ENCODE measurements at regions of chr11 and their contacts with region 1.

Region 1: DNA sequence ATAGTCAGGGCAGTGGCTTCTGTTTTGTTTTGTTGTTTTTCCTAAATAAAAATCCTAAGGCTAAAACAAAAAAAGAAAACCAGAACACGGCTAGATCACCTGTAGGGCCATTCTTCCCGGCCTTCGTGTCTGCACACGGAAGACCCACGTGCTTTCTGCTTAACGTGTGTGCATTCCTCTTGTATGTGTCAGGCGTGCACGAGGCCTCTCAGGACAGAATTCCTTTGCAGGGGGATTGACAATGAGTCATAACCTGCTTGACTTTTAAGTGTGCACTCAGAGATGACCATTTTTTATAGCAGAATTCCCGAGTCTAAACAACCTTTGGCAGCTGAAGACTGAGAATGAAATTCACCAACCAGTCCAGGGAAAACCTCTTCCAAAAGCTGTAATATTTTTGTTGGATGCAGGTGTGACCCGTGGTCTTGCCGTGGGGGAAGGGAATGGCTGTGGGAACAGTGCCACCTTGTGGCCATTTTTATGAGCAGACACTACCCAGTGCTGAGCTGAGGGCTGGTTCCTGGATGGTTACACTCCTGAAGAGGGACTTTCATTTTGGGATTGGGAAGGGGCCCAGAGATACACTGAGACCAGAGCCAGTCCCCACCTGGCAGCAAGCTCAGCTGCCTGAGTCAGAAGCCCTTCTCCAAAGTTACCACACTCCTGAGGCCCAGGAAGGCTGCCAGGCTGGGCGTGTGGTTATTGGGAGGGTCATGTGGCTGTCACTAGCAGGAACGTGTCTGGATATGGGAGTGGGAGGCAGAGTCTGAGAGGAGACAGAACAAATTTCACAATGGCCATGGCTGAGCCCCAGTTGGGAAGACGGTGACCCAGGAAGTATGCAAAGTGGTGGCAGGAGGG is 35.8 kb upstream of the DKK3 start:
- DNase-seq: peak; percentile 95
- H3K4me3 ChIP-seq: peak overlapping the region; percentile 20 to 22
- H3K27ac ChIP-seq: peak overlapping the region; percentile 51 to 69
- H3K4me1 ChIP-seq: peaks cover 0 to 29% (median 20%) of the 10 kb centered on the region in 4 donors
- H3K27me3 ChIP-seq: no peaks in the 10 kb centered on the region
- CTCF ChIP-seq: peak; percentile 89 to 99

Region 2: DNA sequence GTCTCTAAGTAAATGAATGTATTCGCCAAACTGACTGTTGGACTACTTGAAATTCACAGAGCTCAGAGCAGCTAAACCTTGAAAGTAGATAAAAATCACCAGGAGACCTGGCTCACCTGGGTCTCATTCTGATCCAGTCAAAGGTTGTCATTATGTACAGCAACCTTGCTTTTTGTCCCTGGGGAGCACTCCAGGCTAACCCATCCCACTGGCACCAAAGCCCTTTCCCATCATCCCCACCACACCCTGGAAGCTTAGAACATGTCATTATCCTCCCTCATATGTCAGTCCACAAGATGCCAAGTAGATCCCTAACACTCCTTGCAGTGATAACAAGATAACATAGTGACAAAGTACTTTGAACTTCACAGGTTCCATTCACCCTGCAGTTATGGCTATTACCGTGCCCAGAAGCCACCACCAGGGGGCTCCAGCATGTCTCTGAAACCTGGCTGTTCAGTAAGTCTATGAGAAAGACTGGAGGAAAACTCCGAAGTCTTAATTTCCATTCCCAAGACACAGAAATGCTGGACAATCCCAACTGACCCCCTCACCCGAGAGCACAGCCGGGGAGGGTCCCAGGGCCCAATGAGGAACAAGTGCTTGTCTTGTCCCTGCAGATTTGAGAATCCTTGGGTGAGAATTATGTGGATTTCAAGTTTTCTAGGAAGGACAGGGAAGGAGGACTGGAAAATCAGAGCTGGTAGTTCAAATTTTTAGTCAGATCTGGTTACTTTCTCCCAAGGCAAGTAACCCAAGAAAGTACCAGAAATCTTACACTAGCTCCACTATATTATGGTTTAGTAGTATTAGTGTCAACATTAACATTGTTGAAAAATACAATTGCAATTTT is 245.4 kb before region 1 on chr11:
- intact Hi-C with region 1: loop called (anchors 5 kb)
- DNase-seq: peak; percentile 71 to 87
- H3K4me3 ChIP-seq: no peak overlapping the region
- H3K27ac ChIP-seq: no peak overlapping the region
- H3K4me1 ChIP-seq: peaks cover 0 to 5% (median 0%) of the 10 kb centered on the region in 4 donors
- H3K27me3 ChIP-seq: peaks cover 0 to 2% of the 10 kb centered on the region in 2 donors
- CTCF ChIP-seq: peak; percentile 59 to 72

Region 3: GRCh38 chr11:11931461-11932055 is 112.6 kb before region 1 on chr11:
- intact Hi-C with region 1: loop called (anchors 1 kb)
- DNase-seq: no peak
- H3K4me3 ChIP-seq: no peak overlapping the region
- H3K27ac ChIP-seq: no peak overlapping the region
- H3K4me1 ChIP-seq: no peaks in the 10 kb centered on the region
- H3K27me3 ChIP-seq: no peaks in the 10 kb centered on the region
- CTCF ChIP-seq: peak; percentile 56 to 79

Region 4: GRCh38 chr11:12087075-12088004 is 43.2 kb after region 1 on chr11:
- intact Hi-C with region 1: loop called (anchors 2 kb)
- DNase-seq: peak; percentile 65 to 85
- H3K4me3 ChIP-seq: peak overlapping the region; percentile 42 to 50
- H3K27ac ChIP-seq: peak overlapping the region; percentile 84 to 91
- H3K4me1 ChIP-seq: peaks cover 0 to 78% (median 56%) of the 10 kb centered on the region in 4 donors
- H3K27me3 ChIP-seq: no peaks in the 10 kb centered on the region
- CTCF ChIP-seq: peak; percentile 36 to 58

Region 5: DNA sequence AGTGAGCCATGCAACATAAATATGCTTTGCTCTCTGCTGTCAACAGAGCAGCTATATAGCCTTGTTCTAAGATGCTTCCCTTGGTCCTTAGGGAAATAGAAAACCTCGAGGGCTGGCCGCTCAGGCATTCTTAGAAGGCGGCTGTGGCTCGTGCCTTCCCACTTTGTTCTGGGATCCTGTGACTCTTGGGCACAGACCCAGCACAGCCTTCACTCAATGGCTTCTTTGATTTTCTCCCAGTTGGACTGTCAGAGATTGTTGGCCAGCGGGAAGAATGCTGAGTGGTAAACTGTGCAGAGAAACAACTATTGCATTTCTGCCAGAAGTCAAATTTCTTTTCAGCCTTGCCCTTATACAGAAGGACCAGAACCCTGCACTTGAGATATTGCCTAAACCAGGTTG is 56.7 kb after region 1 on chr11:
- intact Hi-C with region 1: no loop called
- DNase-seq: peak in 1 of 2 donors; percentile 77
- H3K4me3 ChIP-seq: no peak overlapping the region
- H3K27ac ChIP-seq: no peak overlapping the region
- H3K4me1 ChIP-seq: peaks cover 0 to 23% (median 6%) of the 10 kb centered on the region in 4 donors
- H3K27me3 ChIP-seq: no peaks in the 10 kb centered on the region
- CTCF ChIP-seq: no peak

Region 6: DNA sequence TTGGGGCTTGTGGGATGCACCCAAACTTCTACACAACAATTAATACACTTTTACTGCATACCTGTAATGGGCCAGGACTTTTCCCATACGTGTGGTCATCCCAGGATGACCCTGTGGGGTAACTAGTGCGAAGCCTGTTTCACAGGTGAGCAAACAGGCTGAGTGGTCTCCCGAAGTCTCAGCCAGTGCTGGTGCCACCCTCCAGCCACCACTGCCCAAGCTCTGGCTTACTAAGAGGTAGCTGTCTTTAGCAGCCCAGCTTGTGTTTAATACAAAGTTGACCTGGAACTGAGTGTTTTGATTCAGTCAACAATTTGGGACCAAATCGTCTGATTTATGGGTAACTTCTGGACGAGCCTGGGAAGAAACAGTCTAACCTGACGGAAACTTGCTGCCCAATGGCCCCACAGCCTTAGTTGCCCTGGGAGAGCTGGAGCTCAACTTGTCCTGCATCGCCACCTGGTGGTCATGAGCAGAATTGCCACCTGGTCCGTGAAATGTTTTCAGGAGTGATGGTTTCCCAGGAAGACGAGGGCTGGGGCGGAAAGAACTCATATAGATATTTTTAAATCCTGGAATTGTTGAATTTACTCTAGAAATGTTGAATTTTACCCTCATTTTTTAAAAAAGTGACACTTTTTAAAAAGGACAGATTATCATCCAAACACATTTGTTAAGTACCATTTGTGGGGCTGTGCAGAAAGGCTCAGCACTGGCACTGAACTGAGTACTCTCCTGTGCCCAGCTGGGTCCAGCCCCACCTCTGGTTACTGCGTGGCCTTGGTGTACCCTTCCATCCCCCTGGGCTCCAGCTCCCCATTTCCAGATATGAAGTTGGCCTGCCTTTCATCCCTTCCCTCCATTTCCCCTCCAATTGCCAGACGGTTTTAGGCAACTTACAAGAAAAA is 237.6 kb after region 1 on chr11:
- intact Hi-C with region 1: loop called (anchors 2 kb)
- DNase-seq: peak; percentile 87 to 92
- H3K4me3 ChIP-seq: no peak overlapping the region
- H3K27ac ChIP-seq: peak overlapping the region in 1 of 2 donors; percentile 23
- H3K4me1 ChIP-seq: peaks cover 0 to 53% (median 25%) of the 10 kb centered on the region in 4 donors
- H3K27me3 ChIP-seq: no peaks in the 10 kb centered on the region
- CTCF ChIP-seq: peak; percentile 88 to 99

Measured in tibial artery (tissue), 4 donors.